Right ventricle myocardium inferior (tissue), 1 donor: ENCODE measurements at regions of chr2 and their contacts with region 1.

Region 1: GRCh38 chr2:225668606-225669266 is 269.2 kb downstream of the NYAP2 start:
- DNase-seq: no peak
- ATAC-seq: no peak

Region 2: DNA sequence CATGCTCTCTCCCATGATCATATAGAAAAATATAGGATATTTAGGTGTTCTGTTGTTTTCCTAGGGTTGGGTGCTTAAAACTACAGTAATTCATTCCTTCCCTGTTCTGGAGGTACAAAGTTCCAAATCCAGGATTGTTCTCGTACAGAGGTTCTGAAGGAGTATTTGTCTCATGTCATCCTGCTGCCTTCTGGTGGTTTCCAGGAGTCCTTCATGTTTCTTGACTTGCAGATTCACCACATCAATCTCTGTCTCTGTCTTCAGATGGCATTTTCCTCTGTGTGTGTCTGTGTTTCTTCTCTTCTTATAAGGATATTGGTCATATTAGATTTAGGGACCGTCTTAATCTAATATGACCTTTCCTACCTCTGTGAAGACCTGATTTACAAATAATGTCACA is 128.7 kb after region 1 on chr2:
- intact Hi-C with region 1: loop called (anchors 5 kb)
- DNase-seq: no peak
- ATAC-seq: no peak

Region 3: DNA sequence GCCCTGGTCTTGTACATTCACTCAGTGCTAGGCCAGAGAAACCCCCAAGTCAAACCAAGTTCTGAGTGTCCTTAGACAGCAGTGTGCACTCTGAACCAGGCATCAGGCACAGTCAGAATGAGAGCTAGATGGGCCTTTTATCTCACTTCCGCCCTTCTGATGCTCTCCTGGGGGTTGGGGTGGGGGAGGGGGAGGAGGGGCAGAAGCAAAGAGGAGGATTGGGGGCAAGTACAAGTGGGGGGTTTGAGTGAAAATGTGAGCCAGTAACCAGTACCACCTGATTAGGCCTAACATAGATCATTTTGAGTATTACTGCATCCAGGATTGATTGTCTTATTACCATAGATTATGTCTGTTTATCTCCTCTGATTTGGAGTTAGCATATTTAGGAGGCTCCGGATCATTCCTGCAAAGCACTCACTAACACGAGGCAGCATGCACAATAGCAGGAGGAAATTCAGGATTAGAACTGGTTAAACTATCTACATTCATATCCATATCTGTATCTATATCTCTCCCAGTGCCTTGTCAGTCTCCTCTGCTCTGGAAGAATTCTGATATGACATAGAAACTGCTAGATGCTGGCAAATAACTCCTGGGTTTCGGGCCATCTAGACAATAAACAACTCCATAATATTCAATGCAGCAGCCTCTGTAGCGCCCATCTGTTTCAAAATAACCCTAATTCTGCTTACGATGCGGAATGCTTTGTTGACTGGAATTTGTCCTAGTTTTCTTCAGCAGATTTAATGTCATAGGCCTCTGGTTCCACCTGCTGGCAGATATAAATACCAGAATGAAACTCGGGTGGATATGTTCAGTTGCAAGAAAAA is 1316.2 kb after region 1 on chr2:
- intact Hi-C with region 1: loop called (anchors 5 kb)
- DNase-seq: no peak
- ATAC-seq: peak; percentile 69

Region 4: DNA sequence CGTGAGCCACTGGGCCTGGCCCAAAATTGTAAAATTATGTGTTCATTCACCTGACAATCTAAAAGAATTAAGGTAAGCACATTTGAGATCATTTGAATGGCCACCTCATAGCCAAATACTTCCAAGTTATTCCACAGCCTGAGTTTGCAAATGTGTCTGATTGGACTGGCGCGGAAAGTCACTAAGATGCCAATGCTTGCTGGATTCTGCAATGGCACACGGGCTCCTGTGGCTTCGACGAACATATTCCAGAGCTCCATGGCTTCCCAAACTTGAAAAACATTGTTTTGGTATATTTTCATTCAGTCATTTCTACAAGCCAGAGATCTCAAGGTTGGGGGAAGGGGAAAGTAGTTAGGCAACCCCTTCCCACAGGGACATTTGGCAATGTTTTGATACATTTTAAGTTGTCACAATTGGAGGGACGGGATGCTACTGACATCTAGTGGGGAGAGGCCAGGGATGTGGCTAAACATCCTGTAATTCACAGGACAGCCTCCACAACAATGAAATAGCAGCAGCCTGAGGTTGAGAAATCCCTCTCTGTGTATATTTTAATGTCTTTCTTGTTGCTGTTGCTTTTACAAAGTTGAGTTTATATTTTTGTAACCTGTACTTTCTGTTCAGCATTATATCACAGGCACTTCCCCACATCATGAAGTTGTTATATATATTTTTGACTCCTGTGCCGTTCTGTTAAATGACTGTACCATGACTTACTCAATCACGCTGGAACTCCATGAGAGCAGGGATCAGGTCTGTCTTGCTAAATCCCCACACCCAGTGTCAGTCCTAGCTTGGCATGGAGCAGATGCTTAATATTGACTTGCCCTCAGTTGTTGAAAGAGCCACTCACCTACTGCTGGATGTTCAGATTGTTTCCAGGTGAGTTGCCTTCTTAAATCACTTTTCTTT is 1438.4 kb after region 1 on chr2:
- intact Hi-C with region 1: loop called (anchors 5 kb)
- DNase-seq: no peak
- ATAC-seq: peak; percentile 37